Mammary epithelial cell (primary cell): ENCODE measurements at regions of chr3 and their contacts with region 1.

Region 1: DNA sequence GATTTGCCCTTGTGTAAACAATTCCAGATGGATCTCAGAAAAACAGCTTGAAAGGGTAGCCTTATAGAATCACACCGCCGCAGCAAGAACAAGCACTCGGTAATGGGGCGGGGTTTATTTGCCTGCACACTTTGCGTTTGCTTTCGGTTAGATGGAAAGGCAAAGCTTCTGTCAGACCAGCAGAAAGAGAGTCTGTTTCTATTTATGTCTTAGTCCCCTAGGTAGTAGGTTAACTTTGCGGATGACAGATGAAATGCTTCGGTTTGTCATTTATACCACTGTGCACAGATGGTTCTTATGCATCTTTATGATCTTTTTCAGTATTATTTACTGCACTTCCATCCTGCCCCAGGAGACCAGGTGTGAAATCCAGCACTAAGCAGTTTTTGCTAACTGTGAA is 62.2 kb downstream of the PYDC2 start:
- DNase-seq: no peak
- H3K4me3 ChIP-seq: no peak overlapping the region
- H3K27ac ChIP-seq: no peak overlapping the region
- H3K4me1 ChIP-seq: no peaks in the 10 kb centered on the region
- H3K27me3 ChIP-seq: peaks cover 2% of the 10 kb centered on the region
- CTCF ChIP-seq: no peak

Region 2: GRCh38 chr3:191509078-191509477 is 14.1 kb before region 1 on chr3:
- CTCF ChIA-PET with region 1: interaction called, 15 read pairs
- dilution Hi-C with region 1: no loop called
- in situ Hi-C with region 1: no loop called
- intact Hi-C with region 1: no loop called
- DNase-seq: no peak
- H3K4me3 ChIP-seq: no peak overlapping the region
- H3K27ac ChIP-seq: no peak overlapping the region
- H3K4me1 ChIP-seq: no peaks in the 10 kb centered on the region
- H3K27me3 ChIP-seq: peaks cover 2% of the 10 kb centered on the region
- CTCF ChIP-seq: no peak